ENCODE measurements at regions of chr14 and their contacts with region 1.

Region 1: DNA sequence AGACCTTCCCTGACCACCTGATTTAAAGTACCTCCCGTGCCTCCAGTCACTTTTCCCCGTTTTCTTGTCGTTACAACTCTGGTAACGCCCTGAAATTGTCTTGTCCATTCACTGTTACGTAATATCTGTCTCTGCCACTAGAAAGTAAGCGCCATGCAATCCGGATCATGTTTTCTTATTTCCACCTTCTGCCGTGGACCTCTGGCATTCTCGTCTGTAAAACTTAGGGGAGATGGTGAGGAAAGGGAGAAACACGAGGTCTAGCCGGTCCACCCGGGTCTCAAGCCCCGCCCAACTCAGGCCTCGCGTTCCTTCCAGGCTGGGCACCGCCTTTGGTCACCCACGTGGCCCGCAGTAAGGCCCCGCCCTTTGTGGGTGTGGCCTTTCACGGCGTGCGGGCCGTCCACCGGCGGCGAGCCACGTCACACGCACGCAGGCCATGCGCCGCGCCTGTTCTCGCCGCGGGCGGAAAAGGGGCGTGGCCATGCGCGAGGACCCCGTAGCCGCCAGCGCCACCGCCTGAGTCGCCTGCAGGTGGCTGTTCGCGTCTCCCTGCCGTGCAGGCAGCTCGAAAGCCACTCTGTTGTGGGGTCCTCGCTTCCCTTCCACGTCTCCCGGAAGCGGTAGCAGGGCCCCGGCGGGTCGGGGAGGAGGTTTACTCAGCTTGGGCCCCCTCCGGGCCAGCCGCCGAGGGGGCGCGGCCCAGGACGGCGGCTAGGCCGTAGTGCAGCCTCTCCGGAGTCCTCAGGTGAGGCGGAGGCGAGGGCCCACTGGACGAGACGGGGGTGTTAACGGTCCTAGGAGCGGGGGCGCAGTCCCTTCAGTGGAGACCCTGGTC is at the start of gene GOLGA5:
- DNase-seq: peak; percentile 99
- ATAC-seq: peak; percentile 92
- H3K4me3 Mint-ChIP-seq: peak within 1 kb of the TSS; percentile 95
- H3K27ac Mint-ChIP-seq: peak within 1 kb of the TSS; percentile 85
- H3K4me1 Mint-ChIP-seq: peaks cover 33% of the 10 kb centered on the region
- H3K27me3 Mint-ChIP-seq: no peaks in the 10 kb centered on the region
- CTCF ChIP-seq: no peak
- total RNA-seq, gene GOLGA5: 16.6 and 18.0 TPM in 2 replicates

Region 2: DNA sequence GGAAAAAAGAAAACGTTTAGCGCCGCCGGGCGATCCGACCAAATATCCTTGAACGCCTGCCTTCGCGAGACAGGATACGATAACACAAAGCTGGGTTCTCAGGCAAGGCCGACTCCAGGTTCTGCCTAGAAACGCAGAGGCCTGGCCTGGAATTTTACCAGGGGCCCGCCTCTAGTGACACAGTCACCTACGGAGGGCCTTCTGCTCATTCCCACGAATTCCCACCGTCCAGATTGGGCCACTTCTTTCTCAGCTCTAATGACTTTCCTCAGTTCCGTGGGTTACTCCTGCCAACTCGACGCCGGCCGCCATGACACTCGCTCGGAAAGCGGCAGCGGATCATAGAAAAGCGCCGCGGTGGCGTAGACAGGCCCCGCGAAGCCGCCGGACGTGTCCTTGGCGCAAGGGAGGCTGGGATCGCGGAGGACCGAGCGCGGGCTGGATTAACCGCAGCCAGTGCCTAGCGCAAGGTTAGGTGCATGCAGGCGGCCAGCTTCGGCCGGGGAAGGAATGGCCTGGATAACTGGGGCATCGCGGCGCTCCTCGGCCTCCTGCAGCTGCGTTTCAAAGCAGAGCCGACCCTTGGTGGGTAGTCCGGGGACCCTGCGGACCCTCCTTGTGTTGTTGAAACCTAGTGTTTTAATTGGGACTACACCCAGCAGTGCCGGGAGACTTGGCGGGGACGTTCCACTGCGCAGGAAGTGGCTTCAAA is 754.1 kb before region 1 on chr14 and contains the start of gene TRIP11:
- CTCF ChIA-PET with region 1: no interaction called
- POLR2A ChIA-PET with region 1: no interaction called
- intact Hi-C with region 1: loop called (anchors 1 kb)
- DNase-seq: peak; percentile 94
- ATAC-seq: peak; percentile 96
- H3K4me3 Mint-ChIP-seq: peak within 1 kb of the TSS; percentile 98
- H3K27ac Mint-ChIP-seq: peak within 1 kb of the TSS; percentile 95
- H3K4me1 Mint-ChIP-seq: peaks cover 40% of the 10 kb centered on the region
- H3K27me3 Mint-ChIP-seq: no peaks in the 10 kb centered on the region
- CTCF ChIP-seq: no peak
- total RNA-seq, gene TRIP11: 46.2 and 59.5 TPM in 2 replicates

Region 3: GRCh38 chr14:92121670-92122350 is 672.1 kb before region 1 on chr14 and contains the starts of genes CPSF2 and NDUFB1:
- CTCF ChIA-PET with region 1: no interaction called
- POLR2A ChIA-PET with region 1: interaction called, 6 read pairs
- intact Hi-C with region 1: loop called (anchors 1 kb)
- DNase-seq: peak; percentile 78
- ATAC-seq: peak; percentile 92
- H3K4me3 Mint-ChIP-seq: peak within 1 kb of the TSS; percentile 100
- H3K27ac Mint-ChIP-seq: peak within 1 kb of the TSS; percentile 100
- H3K4me1 Mint-ChIP-seq: peaks cover 35% of the 10 kb centered on the region
- H3K27me3 Mint-ChIP-seq: no peaks in the 10 kb centered on the region
- CTCF ChIP-seq: no peak
- total RNA-seq, gene CPSF2: 46.9 and 53.2 TPM in 2 replicates
- total RNA-seq, gene NDUFB1: 88.2 and 94.2 TPM in 2 replicates

Region 4: DNA sequence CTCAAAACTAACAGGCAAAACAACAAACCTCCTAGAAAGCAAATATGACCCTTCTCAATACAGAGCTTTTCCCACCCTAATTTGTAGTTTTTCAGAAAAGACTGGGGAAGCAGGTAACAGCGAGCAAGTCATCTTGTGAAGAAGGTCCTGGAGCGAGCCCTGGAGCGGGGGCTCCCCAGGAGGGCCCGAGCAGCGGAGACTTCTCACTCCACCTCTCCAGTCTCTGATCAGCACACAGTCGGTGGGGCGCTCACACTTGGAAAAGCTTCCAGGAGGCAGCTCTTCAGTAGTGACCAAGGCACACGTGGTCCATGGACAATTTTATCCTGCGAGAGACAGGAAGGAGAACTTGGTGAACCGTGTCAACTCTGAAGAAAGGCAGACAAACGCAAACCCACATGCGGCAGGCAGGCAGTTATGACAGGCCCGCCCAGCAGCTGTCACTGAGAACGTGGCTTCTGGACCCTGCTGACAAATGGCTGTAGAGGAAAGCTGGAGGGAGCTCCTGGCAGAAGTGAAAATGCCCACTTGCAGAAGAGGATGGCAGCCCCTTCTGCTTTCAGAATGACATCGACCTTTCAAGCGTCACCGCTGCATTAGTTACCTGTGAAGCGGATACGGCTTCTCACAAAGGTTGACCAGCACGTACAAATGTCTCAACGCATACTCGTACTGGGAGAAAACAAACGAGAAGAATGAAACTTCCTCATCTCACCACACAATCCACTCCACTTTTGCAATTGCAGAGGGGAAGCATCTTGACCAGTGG is 89.7 kb before region 1 on chr14:
- CTCF ChIA-PET with region 1: no interaction called
- POLR2A ChIA-PET with region 1: interaction called, 4 read pairs
- intact Hi-C with region 1: loop called (anchors 5 kb)
- DNase-seq: peak; percentile 57
- ATAC-seq: peak; percentile 98
- H3K4me3 Mint-ChIP-seq: peak overlapping the region; percentile 51
- H3K27ac Mint-ChIP-seq: peak overlapping the region; percentile 90
- H3K4me1 Mint-ChIP-seq: peaks cover 60% of the 10 kb centered on the region
- H3K27me3 Mint-ChIP-seq: no peaks in the 10 kb centered on the region
- CTCF ChIP-seq: no peak

Region 5: DNA sequence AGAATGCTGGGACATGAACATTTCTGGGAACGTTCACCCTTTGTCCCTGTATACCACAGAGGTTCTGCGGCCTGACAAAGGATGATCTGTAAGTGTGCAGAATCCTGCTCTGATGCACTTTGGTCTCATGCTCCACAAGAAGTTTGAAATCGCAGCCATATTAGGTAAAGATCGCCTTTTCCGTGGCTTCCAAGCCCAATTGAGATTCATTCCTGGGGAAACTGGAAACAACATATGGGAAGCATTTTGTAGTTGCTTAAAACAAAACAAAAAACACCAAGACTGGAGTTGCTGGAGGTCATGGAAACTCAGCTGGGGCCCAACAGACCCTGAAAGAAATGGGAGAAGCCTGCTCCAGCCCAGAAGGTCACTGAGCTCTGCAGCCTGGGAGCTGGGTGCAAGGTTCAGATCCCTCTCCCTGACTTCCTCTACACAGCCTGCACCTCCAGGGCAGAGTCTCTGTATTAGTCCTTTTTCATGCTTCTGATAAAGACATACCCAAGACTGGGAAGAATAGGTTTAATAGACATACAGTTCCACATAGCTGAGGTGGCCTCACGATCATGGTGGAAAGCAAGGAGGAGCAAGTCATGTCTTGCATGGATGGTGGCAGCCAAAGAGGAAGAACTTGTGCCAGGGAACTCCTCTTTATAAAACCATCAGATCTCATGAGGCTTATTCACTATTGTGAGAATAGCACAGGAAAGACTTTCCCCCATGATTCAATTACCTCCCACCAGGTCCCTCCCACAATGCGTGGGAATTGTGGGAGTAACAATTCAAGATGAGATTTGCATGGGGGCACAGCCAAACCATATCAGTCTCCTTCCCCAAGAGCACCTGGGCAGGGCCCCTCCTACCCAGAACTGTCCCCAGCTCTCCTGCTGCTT is 68.2 kb after region 1 on chr14:
- CTCF ChIA-PET with region 1: no interaction called
- POLR2A ChIA-PET with region 1: no interaction called
- intact Hi-C with region 1: no loop called
- DNase-seq: no peak
- ATAC-seq: no peak
- H3K4me3 Mint-ChIP-seq: no peak overlapping the region
- H3K27ac Mint-ChIP-seq: no peak overlapping the region
- H3K4me1 Mint-ChIP-seq: no peaks in the 10 kb centered on the region
- H3K27me3 Mint-ChIP-seq: peaks cover 7% of the 10 kb centered on the region
- CTCF ChIP-seq: no peak

Region 6: DNA sequence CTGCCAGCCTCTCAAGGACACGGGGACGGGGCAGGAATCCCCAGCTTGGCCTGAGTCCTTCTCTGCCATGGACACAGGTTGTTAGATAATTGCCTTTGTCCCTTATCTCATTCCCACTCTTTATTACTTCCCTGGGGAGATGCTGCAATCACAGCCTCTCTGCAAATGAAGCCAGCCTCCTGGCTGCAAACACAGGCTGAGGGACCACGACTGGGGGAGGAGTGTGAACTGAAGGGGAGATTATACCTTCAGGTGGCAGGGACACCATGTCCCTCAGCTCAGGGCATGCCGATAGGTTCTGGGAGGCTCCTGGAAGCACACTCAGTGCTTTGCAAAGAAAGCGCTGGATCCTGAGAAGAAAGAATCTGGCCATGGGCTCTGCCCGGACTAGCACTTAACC is 112.9 kb after region 1 on chr14:
- CTCF ChIA-PET with region 1: no interaction called
- POLR2A ChIA-PET with region 1: no interaction called
- intact Hi-C with region 1: no loop called
- DNase-seq: no peak
- ATAC-seq: no peak
- H3K4me3 Mint-ChIP-seq: no peak overlapping the region
- H3K27ac Mint-ChIP-seq: no peak overlapping the region
- H3K4me1 Mint-ChIP-seq: no peaks in the 10 kb centered on the region
- H3K27me3 Mint-ChIP-seq: peaks cover 25% of the 10 kb centered on the region
- CTCF ChIP-seq: no peak

Region 7: DNA sequence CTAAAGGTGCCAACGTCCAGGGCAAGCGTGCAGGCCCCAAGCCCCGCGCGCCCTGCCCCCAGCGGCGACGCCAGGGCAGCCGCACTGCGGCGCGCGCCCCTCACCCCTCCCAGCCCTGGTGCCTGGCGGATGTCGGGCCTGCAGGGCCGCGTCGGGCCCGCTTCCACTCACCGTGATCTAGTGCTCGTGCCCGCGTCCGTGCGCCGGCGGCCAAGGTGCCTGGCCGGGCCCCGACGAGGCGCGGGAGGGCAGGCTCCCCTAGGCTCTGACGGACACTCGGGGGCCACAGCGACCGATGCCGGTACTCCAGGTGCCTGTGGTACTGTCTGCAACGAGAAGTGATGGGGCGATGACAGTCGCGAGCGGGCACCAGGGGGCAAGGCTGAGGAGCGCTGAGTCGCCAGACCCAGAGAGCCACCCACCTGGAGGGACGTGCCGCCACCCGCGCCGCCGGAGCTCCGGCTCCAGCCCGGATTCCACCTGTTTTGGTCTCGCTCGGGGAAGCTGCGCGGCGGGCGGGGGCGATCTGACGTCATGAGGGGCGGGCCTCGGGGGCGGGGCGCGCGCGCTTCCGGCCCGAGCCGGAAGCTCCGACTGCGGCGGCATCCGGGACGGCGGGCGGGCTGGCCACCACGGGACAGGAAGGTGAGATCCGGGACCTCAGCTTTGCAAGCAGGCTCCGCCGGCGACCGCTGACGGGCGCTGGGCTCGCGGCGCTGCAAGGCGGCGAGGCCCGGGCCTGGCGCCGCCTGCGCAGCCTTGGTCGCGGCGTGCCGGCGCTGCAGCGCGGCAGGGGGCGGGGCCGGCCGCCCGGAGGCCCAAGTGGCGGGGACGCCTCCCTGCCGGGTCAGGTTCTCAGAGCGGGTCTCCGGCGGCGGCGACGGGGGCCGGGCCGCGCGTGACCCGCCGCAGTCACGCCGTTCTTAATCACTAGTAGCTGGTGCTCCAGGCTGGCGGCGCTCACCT is 390.7 kb after region 1 on chr14 and contains the starts of genes LYSET and MOAP1:
- CTCF ChIA-PET with region 1: no interaction called
- POLR2A ChIA-PET with region 1: no interaction called
- intact Hi-C with region 1: loop called (anchors 1 kb)
- DNase-seq: peak; percentile 81
- ATAC-seq: peak; percentile 83
- H3K4me3 Mint-ChIP-seq: peak within 1 kb of the TSS; percentile 92
- H3K27ac Mint-ChIP-seq: peak within 1 kb of the TSS; percentile 93
- H3K4me1 Mint-ChIP-seq: peaks cover 24% of the 10 kb centered on the region
- H3K27me3 Mint-ChIP-seq: no peaks in the 10 kb centered on the region
- CTCF ChIP-seq: no peak
- total RNA-seq, gene LYSET: 17.6 and 19.3 TPM in 2 replicates
- total RNA-seq, gene MOAP1: 21.3 and 24.4 TPM in 2 replicates